PC-3 (cell line): ENCODE measurements at regions of chr10 and their contacts with region 1.

Region 1: DNA sequence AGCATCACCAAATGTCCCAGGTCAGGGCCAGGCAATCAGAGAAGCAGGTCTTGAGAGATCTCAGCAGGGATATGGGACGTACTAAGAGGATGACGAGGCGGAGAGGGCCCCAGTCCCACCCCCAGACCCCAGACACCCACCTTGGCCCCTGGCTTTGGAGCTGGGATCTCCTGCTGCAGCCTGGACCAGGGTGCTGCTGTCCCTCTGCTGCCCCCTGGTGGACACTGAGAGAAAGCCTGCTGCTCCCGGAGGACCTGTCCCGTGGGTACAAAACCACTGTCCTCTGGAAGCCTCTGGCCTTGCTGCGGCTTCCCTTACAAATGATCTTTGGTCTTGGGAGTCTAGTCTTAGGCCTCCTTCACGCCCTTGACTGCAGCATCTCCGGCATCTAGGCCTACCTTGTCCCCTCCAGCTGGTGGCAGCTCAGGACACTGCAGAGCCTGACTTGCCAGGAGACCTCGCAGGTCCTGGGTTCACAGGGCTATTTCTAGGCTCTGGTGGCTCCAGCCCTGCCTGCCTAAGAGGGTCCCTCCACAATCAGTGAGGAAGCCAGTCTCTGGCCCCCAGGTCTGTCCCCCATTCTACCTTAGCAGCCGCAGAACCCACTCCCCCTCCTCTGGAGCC is 97.1 kb downstream of the RGS10 start:
- DNase-seq: peak; percentile 73
- ATAC-seq: peak; percentile 49
- H3K4me3 ChIP-seq: no peak overlapping the region
- H3K27ac ChIP-seq: no peak overlapping the region
- H3K4me1 ChIP-seq: peaks cover 14% of the 10 kb centered on the region
- H3K27me3 ChIP-seq: no peaks in the 10 kb centered on the region
- CTCF ChIP-seq: peak; percentile 84

Region 2: DNA sequence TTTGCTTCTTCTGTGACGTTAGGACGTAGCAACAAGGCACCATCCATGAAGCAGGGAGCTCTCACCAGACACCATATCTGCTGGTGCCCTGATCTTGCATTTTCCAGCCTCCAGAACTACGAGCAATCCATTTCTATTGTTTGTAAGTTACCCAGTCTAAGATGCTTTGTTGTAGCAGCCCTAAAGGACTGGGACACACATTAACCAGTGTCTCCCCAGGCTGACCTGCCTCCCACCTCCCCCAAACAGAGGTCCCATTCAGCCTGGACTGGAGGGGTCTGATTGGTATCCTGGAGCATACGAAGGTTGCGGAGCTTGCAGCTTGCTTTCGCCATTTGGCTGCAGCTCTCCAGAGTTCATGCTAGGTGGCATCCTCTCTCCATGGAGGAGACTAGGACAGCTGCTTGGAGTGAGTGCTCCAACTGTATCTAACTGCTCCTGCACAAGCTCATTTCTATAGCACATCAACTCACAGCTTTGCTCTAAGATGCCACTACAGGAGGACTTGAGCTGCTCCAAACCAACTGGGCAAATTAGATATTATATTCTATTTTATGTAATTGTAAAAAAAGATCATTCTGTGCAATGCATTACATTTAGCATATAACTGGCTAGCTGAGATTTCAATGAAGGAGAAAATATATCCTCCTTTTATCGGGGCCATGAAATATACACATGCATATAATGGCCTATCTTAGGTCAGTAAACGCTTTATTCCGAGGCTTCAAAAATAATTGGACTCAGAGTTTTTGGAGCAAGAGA is 246.0 kb before region 1 on chr10:
- CTCF ChIA-PET with region 1: interaction called, 7 read pairs
- POLR2A ChIA-PET with region 1: no interaction called
- intact Hi-C with region 1: loop called (anchors 5 kb)
- DNase-seq: peak; percentile 70
- ATAC-seq: peak; percentile 88
- H3K4me3 ChIP-seq: no peak overlapping the region
- H3K27ac ChIP-seq: no peak overlapping the region
- H3K4me1 ChIP-seq: peaks cover 18% of the 10 kb centered on the region
- H3K27me3 ChIP-seq: no peaks in the 10 kb centered on the region
- CTCF ChIP-seq: peak; percentile 76

Region 3: DNA sequence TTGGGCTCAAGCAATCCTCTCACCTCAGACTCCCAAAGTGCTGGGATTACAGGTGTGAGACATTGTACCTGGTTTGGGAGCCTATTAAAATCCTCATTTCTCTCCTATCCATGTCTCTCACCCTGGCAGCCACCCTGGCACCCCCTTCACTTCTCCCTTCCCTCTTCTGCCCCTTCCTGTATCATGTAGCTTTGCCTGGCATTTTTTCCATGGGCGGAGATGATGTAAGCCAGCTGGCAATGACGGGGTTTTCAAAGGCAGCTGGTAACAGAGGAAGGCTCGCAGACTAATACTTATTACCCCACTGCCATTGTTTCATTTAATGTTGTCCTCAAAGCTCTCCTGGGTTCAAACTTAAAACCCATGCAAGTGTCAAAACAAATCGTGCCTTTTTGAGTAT is 35.2 kb after region 1 on chr10:
- CTCF ChIA-PET with region 1: no interaction called
- POLR2A ChIA-PET with region 1: no interaction called
- intact Hi-C with region 1: loop called (anchors 1 kb)
- DNase-seq: no peak
- ATAC-seq: no peak
- H3K4me3 ChIP-seq: no peak overlapping the region
- H3K27ac ChIP-seq: no peak overlapping the region
- H3K4me1 ChIP-seq: peaks cover 6% of the 10 kb centered on the region
- H3K27me3 ChIP-seq: no peaks in the 10 kb centered on the region
- CTCF ChIP-seq: no peak

Region 4: DNA sequence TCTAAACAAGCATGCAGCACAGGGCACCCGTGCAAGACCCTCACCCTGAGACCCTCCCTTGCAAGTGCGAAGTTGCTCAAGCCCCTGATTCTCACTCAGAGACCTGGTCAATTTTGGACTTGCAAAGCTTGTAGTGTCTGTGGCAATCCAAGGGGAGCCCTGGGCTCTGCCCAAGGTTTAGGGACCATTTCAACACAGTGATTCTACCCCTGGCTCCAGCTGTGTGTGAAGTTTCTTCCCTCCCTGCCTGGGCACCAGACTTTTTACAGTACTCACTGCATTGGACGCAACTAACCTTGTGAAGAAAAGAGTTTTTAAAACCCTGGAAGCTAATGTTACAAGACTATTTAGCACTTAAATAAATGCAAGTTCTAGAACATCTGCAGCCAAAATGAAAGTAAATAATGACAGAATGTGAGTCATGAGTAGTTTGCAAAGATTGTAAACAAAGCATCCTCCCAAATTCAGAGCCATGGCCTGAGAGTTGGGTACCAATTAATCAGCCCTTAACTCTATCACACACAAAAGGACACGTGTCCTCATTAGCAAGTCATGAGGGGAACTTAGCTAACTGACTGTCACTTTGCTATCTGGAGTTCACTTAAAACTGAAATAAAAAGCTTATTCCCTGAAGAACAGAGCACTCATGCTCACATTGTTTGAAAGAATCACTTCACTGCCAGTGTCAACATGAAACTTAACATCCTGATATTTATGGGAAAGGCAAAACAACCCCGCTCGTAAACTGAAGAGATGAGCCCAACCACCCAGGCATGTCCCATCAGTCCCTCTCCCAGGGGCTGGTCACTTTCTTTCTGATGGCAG is 49.0 kb after region 1 on chr10:
- CTCF ChIA-PET with region 1: interaction called, 4 read pairs
- POLR2A ChIA-PET with region 1: interaction called, 3 read pairs
- intact Hi-C with region 1: loop called (anchors 1 kb)
- DNase-seq: peak; percentile 67
- ATAC-seq: peak; percentile 79
- H3K4me3 ChIP-seq: no peak overlapping the region
- H3K27ac ChIP-seq: peak overlapping the region; percentile 70
- H3K4me1 ChIP-seq: peaks cover 18% of the 10 kb centered on the region
- H3K27me3 ChIP-seq: no peaks in the 10 kb centered on the region
- CTCF ChIP-seq: no peak

Region 5: GRCh38 chr10:119542988-119543813 is 97.8 kb after region 1 on chr10:
- CTCF ChIA-PET with region 1: no interaction called
- POLR2A ChIA-PET with region 1: no interaction called
- intact Hi-C with region 1: loop called (anchors 5 kb)
- DNase-seq: peak; percentile 56
- ATAC-seq: peak; percentile 42
- H3K4me3 ChIP-seq: peak overlapping the region; percentile 79
- H3K27ac ChIP-seq: 0 out of 2 replicates have a peak overlapping the region, but pooled peaks have one; percentile 3
- H3K4me1 ChIP-seq: peaks cover 27% of the 10 kb centered on the region
- H3K27me3 ChIP-seq: no peaks in the 10 kb centered on the region
- CTCF ChIP-seq: peak; percentile 72